Endothelial cell of umbilical vein (primary cell): ENCODE measurements at regions of chr7 and their contacts with region 1.

Region 1: DNA sequence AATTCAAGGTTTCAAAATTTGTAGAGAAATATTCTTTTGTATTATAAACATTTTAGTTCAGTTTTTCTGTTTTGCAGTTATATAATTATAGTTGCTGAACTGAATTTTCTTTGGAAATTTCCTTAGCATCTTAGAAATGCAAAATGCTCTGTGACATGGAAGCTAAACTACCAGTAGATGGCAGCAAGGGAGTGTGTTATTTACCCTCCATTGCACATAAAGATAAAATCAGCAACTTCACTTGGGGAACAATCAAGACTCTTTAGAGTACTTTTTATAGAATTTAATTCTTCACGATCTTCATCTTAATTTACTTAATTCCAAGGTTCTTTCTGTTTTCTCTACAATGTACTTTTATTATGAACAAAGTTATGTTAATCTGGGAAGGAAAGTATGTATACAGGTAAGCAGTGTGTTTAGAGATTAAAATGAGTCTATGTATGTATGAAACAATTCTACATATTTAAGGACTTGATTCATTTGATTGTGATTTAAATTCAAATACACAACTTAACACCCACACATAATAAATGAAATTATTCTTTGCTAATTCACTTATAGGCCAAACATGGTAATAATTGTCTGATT is 404.2 kb downstream of the THSD7A start:
- DNase-seq: peak; percentile 86
- H3K4me3 ChIP-seq: no peak overlapping the region
- H3K27ac ChIP-seq: peak overlapping the region; percentile 1
- H3K4me1 ChIP-seq: peaks cover 5% of the 10 kb centered on the region
- H3K27me3 ChIP-seq: no peaks in the 10 kb centered on the region
- CTCF ChIP-seq: peak; percentile 43 to 48
- POLR2A ChIP-seq: no peak

Region 2: GRCh38 chr7:11315687-11316258 is 112.0 kb before region 1 on chr7:
- CTCF ChIA-PET with region 1: no interaction called
- POLR2A ChIA-PET with region 1: no interaction called
- dilution Hi-C with region 1: no loop called
- intact Hi-C with region 1: no loop called
- DNase-seq: no peak
- H3K4me3 ChIP-seq: no peak overlapping the region
- H3K27ac ChIP-seq: no peak overlapping the region
- H3K4me1 ChIP-seq: no peaks in the 10 kb centered on the region
- H3K27me3 ChIP-seq: no peaks in the 10 kb centered on the region
- CTCF ChIP-seq: no peak
- POLR2A ChIP-seq: no peak

Region 3: GRCh38 chr7:11376549-11376948 is 51.2 kb before region 1 on chr7:
- CTCF ChIA-PET with region 1: no interaction called
- POLR2A ChIA-PET with region 1: no interaction called
- dilution Hi-C with region 1: no loop called
- intact Hi-C with region 1: no loop called
- DNase-seq: no peak
- H3K4me3 ChIP-seq: no peak overlapping the region
- H3K27ac ChIP-seq: no peak overlapping the region
- H3K4me1 ChIP-seq: no peaks in the 10 kb centered on the region
- H3K27me3 ChIP-seq: no peaks in the 10 kb centered on the region
- CTCF ChIP-seq: no peak
- POLR2A ChIP-seq: no peak

Region 4: DNA sequence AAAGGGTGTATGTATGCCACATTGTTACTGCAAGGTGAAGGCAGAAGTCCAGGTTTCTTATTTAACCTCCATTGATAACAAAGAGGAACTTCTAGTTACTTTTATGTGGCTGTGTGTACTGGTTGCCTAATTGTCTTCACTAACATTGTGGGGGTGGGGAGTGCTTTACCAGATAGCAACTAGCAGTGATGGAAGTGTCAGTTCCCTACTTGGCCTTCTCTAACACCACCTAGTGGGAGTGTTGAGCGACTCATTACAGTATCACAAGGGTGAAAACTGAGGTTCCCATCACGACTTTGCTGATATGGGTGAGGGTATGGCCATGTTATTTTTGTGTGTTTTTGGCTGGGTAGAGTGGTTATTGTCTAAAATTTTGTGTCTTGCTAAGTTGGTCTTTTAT is 129.8 kb after region 1 on chr7:
- CTCF ChIA-PET with region 1: interaction called, 8 read pairs
- POLR2A ChIA-PET with region 1: no interaction called
- dilution Hi-C with region 1: no loop called
- intact Hi-C with region 1: loop called (anchors 1 kb)
- DNase-seq: peak; percentile 37
- H3K4me3 ChIP-seq: no peak overlapping the region
- H3K27ac ChIP-seq: no peak overlapping the region
- H3K4me1 ChIP-seq: no peaks in the 10 kb centered on the region
- H3K27me3 ChIP-seq: no peaks in the 10 kb centered on the region
- CTCF ChIP-seq: peak; percentile 31 to 41
- POLR2A ChIP-seq: no peak

Region 5: GRCh38 chr7:12244129-12244528 is 816.3 kb after region 1 on chr7:
- CTCF ChIA-PET with region 1: interaction called, 4 read pairs
- POLR2A ChIA-PET with region 1: no interaction called
- dilution Hi-C with region 1: no loop called
- intact Hi-C with region 1: loop called (anchors 5 kb)
- DNase-seq: peak; percentile 36
- H3K4me3 ChIP-seq: no peak overlapping the region
- H3K27ac ChIP-seq: no peak overlapping the region
- H3K4me1 ChIP-seq: no peaks in the 10 kb centered on the region
- H3K27me3 ChIP-seq: no peaks in the 10 kb centered on the region
- CTCF ChIP-seq: peak; percentile 48 to 64
- POLR2A ChIP-seq: no peak

Region 6: GRCh38 chr7:12291870-12292269 is 864.1 kb after region 1 on chr7:
- CTCF ChIA-PET with region 1: interaction called, 4 read pairs
- POLR2A ChIA-PET with region 1: no interaction called
- dilution Hi-C with region 1: no loop called
- intact Hi-C with region 1: loop called (anchors 1 kb)
- DNase-seq: peak; percentile 13
- H3K4me3 ChIP-seq: no peak overlapping the region
- H3K27ac ChIP-seq: no peak overlapping the region
- H3K4me1 ChIP-seq: no peaks in the 10 kb centered on the region
- H3K27me3 ChIP-seq: peaks cover 4% of the 10 kb centered on the region in 2 experiments
- CTCF ChIP-seq: peak; percentile 47 to 49
- POLR2A ChIP-seq: no peak